ENCODE measurements at regions of chr9 and their contacts with region 1.

Region 1: DNA sequence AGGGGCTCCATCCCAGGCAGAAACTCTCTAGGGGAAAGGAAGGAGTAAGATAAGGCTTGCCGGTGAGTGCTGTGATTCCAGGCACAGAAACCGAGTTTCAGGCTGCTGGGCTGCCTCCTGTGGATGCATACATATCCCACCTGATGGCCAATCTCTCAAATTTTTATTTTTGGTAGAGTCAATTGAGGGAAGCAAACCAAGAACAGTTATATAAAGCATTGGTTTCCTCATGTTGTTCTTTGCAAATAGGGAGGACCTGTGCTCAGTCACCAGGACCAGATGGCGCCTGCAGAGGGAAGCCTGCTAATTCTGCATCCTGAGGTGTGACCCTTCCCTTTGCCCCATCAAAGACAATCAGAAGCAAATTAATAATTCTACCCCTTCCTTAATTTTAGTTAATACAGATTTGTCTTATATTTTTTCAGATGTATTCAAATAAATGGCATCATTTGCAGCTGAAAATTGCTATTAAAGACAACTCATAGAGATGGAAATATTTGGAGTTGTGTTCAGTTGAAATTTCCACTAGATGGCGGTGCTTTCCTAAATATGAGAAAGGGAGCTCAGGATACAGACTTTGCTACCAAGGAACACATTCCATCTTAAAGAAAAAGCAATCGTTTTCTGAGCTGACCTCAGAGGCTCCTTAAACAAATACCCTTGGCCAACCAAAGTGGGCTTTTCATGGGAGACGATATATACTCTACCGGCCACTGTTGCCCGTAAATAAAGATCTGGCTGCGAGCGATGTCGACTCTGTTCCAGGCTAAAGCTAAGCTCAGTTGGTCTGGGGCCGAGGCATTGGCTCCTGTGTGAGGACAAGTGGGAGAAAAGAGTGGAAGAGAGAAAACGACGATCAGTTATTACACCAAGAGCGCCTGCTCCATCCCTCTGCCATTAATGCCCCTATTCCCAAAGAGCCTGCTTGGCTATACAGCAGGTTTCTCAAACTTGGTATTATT is 225.7 kb upstream of the KLF9 start:
- DNase-seq: no peak
- H3K4me3 ChIP-seq: peak overlapping the region in 1 of 2 donors; percentile 27
- H3K27ac ChIP-seq: no peak overlapping the region
- H3K4me1 ChIP-seq: no peaks in the 10 kb centered on the region
- H3K27me3 ChIP-seq: no peaks in the 10 kb centered on the region
- CTCF ChIP-seq: peak; percentile 36 to 68 (median 52)

Region 2: GRCh38 chr9:70924895-70925547 is 284.9 kb after region 1 on chr9:
- intact Hi-C with region 1: loop called (anchors 10 kb)
- DNase-seq: peak in 1 of 2 donors; percentile 82
- H3K4me3 ChIP-seq: peak overlapping the region; percentile 41 to 57
- H3K27ac ChIP-seq: peak overlapping the region; percentile 56 to 70
- H3K4me1 ChIP-seq: peaks cover 3 to 4% of the 10 kb centered on the region in 2 donors
- H3K27me3 ChIP-seq: no peaks in the 10 kb centered on the region
- CTCF ChIP-seq: peak; percentile 68 to 77 (median 76)

Region 3: DNA sequence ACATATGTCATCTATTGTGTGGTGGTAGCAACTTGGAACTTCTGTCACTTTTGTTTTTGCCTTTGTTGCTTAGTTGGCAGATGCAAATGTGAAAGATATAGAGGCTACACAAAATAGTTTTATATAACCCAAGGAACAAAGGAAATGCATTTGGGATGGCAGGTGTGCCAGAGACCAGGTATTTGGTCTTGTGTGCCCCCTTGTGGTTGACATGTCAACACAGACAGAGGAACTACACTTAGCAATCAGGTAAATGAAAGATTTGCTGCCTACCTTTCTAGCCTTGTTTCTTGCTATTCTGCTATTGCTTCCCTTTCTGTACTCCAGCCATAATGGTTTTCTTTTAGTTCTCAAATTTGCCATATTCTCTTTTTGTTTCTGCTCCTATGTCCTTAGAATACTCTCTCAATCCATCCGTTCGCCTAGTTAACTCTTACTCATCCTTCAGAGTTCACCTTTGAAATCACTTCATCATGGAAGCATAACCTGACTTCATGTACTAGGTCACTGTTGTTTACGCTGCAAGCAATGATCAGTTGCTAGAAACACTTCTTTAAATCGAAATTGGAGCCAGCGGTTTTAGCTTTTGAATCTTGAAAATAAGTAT is 361.7 kb after region 1 on chr9:
- intact Hi-C with region 1: loop called (anchors 5 kb)
- DNase-seq: no peak
- H3K4me3 ChIP-seq: no peak overlapping the region
- H3K27ac ChIP-seq: no peak overlapping the region
- H3K4me1 ChIP-seq: peaks cover 3 to 6% of the 10 kb centered on the region in 2 donors
- H3K27me3 ChIP-seq: no peaks in the 10 kb centered on the region
- CTCF ChIP-seq: peak in 1 of 3 experiments; percentile 41

Region 4: DNA sequence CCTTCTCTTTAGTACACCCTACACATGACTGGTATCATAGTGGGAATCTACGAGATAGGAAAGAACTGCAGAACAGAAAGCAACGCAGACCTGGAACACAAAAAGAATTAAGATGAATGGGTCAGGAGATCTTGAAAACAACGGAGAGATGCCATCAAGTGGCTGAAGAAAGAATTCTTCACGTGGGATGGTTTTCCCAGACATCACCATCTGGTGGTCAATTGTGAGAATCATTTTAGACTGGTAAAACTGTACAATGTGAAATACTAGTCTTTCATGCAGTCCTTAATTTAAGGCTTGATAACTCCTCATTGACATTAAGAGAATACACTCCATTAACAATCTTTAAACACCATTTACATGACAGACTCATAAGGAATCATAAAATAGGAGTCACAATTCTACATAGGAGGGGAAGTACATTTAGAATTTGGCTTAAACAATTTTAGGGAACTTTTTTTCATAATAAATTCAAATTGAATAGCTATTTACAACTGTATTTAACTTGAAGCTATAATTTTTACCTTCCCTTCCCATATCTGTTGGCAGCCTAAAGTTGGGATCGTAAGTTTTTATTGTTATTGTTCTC is 609.7 kb after region 1 on chr9:
- intact Hi-C with region 1: loop called (anchors 1 kb)
- DNase-seq: no peak
- H3K4me3 ChIP-seq: no peak overlapping the region
- H3K27ac ChIP-seq: no peak overlapping the region
- H3K4me1 ChIP-seq: no peaks in the 10 kb centered on the region
- H3K27me3 ChIP-seq: no peaks in the 10 kb centered on the region
- CTCF ChIP-seq: peak; percentile 46 to 77 (median 71)

Measured in ascending aorta (tissue), 2 donors.